ENCODE measurements at regions of chr17 and their contacts with region 1.

Region 1: GRCh38 chr17:27569257-27569722 is 61.7 kb upstream of the LGALS9 start:
- DNase-seq: no peak
- H3K4me3 ChIP-seq: no peak overlapping the region
- CTCF ChIP-seq: peak; percentile 64

Region 2: GRCh38 chr17:27256225-27257030 is 312.9 kb before region 1 on chr17:
- CTCF ChIA-PET with region 1: no interaction called
- POLR2A ChIA-PET with region 1: no interaction called
- DNase-seq: peak; percentile 77
- H3K4me3 ChIP-seq: no peak overlapping the region
- CTCF ChIP-seq: no peak

Region 3: GRCh38 chr17:27586203-27586721 is 17.0 kb after region 1 on chr17:
- CTCF ChIA-PET with region 1: interaction called, 11 read pairs
- POLR2A ChIA-PET with region 1: no interaction called
- DNase-seq: peak; percentile 68
- H3K4me3 ChIP-seq: no peak overlapping the region
- CTCF ChIP-seq: no peak

Measured in AG04449 (cell line).